ENCODE measurements at regions of chr17 and their contacts with region 1.

Region 1: GRCh38 chr17:42322382-42323267 is 34.3 kb downstream of the STAT5A start:
- DNase-seq: peak; percentile 92
- H3K27ac ChIP-seq: peak overlapping the region; percentile 55
- CTCF ChIP-seq: peak; percentile 97

Region 2: DNA sequence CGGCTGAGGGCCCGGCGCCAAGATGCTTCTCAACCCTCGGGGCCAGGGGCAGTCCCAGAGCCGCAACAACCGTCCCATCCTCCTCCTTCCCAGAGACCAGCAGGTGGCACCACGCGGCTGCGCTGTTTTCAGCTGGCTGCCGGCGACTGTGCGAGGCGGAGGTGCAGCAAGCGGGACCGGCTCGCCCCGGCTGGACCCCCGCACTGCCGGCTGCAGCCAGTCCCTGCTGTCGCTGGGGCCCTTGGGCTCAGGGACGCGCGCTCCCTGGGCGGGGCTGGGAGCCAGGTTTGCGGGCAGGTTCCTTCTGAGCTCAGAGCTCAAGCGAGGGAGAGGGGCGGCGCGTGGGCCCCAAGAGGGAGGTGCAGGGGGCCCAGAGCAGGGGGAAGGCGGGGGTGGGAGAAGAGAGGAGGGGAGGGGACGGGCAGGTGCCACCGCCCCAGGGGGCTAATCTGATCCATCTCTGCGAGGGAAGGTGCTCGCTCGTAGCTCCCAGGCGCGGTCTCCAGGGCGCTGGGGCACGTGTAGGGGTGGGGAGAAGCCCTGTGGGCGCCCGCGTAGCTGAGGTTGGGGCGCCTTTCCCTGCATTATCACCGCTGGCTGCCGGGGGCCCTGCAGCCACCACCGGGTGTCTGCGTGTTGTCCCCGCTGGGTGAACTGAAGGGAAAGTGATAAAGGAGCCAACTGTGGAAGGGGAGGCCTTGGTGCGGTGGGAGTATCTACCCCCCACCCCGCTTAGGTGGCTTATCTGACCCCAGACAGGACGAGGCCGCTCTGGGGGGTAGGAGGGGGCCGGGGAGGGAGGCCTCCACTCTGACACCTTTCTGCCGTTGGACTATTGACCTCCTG is 10.1 kb before region 1 on chr17:
- CTCF ChIA-PET with region 1: interaction called, 10 read pairs
- POLR2A ChIA-PET with region 1: no interaction called
- DNase-seq: peak; percentile 58
- H3K27ac ChIP-seq: peak overlapping the region; percentile 41
- CTCF ChIP-seq: peak; percentile 74

Measured in RWPE1 (cell line).